ENCODE measurements at regions of chr20 and their contacts with region 1.

Region 1: DNA sequence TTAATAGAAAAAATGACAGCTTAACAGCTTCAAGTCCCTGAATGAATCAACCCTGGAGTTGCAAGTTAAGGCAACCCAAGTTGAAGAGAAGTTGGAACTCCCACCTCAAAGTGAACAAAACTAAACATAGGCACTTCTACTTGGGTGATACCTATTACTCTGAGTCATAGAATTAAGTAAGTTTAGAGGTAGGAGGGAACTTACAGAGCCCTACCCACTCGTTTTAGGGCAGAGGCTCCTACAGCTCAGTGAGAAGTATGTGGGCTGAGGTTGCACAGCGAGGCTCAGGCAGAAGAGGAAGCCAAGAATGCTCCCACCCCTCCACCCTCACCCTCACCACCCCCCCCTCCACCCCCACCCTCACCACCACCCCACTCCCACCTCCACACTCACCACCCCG is 42.2 kb downstream of the NFATC2 start:
- DNase-seq: peak; percentile 68
- H3K4me3 Mint-ChIP-seq: no peak overlapping the region
- H3K27ac Mint-ChIP-seq: peak overlapping the region; percentile 94
- H3K4me1 Mint-ChIP-seq: peaks cover 73% of the 10 kb centered on the region
- H3K27me3 Mint-ChIP-seq: no peaks in the 10 kb centered on the region

Region 2: GRCh38 chr20:51385646-51386530 is 114.4 kb before region 1 on chr20:
- CTCF ChIA-PET with region 1: interaction called, 6 read pairs
- POLR2A ChIA-PET with region 1: no interaction called
- intact Hi-C with region 1: loop called (anchors 1 kb)
- DNase-seq: peak; percentile 50
- H3K4me3 Mint-ChIP-seq: no peak overlapping the region
- H3K27ac Mint-ChIP-seq: no peak overlapping the region
- H3K4me1 Mint-ChIP-seq: peaks cover 73% of the 10 kb centered on the region
- H3K27me3 Mint-ChIP-seq: no peaks in the 10 kb centered on the region

Region 3: DNA sequence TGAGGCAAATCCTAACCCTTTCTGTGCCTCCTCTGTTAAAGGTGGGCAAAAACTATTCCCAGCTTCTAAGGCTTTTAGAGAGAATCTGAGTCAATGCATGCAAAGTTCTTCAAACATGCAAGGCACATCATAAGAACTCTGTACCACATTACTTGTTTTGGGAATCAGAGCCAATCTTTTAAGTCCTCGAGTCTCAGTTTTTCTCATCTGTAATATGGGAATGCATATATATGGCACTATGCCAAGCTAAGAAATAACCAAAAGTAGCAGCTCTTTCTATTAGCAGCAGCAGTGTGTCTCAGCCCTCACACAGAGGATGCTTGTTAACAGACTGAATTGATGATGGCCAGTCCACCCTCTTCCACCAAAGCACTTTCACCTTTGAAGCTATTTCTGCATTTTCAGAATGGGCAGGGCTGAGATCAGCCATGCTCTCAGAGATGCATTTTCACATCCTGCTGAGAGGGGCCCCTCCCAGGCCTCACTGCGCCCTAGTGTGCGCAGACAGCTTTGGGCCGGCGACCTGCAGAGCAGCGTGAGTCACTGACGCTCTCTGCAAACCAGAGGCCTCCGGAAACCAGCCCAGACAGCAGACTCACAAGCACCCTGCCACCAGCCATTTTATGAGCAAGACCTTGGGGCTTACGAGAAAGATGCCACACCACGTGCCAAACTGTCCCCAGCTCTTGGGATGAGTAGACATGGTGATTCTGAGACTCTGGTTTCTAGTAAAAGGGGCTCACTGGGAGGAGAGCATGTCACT is 95.8 kb before region 1 on chr20:
- CTCF ChIA-PET with region 1: no interaction called
- POLR2A ChIA-PET with region 1: interaction called, 10 read pairs
- intact Hi-C with region 1: loop called (anchors 1 kb)
- DNase-seq: peak; percentile 97
- H3K4me3 Mint-ChIP-seq: peak overlapping the region; percentile 17
- H3K27ac Mint-ChIP-seq: peak overlapping the region; percentile 99
- H3K4me1 Mint-ChIP-seq: peaks cover 93% of the 10 kb centered on the region
- H3K27me3 Mint-ChIP-seq: no peaks in the 10 kb centered on the region

Region 4: DNA sequence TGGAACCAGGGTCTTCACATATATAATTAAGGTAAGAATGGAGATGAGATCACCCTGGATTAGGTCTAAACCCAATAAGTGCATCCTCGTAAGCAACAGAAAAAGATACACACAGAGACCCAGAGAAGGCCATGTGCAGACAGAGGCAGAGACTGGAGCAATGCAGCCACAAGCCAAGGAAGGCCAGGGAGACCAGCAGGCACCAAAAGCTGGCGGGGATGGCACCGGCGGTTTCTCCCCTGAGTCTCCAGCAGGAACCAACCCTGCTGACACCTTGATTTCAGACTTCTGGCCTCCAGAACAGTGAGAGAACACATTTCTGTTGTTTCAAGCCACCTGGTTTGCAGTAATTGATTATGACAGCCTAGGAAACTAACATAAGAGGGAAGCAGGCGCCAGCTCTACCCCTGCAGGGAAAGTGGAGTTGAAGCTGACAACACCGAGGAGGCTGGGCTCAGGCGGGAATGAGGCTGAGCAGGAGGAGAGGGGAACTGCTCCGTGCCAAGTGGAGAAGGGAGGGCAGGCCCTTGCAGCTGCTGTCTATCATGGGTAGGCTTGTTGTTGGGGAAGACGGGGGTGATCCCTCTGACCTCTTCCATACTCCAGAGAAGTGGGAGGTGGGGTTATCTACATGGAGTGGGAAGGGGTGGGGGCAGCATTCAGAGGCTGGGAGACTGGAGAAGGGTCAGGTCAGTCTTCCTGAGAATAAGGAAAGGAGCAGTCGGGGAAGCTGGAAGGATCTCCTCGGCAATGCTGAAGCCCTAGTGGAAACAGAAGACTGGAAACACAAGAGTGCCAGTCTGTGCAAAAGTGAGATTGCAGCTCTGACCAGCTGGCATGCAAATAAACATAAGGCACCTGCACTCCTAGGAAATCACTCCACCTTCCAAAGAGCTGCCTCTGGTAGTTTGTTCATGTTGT is 30.5 kb before region 1 on chr20:
- CTCF ChIA-PET with region 1: interaction called, 3 read pairs
- POLR2A ChIA-PET with region 1: interaction called, 5 read pairs
- intact Hi-C with region 1: loop called (anchors 2 kb)
- DNase-seq: no peak
- H3K4me3 Mint-ChIP-seq: no peak overlapping the region
- H3K27ac Mint-ChIP-seq: peak overlapping the region; percentile 89
- H3K4me1 Mint-ChIP-seq: peaks cover 53% of the 10 kb centered on the region
- H3K27me3 Mint-ChIP-seq: no peaks in the 10 kb centered on the region

Region 5: GRCh38 chr20:51512645-51513044 is 12.3 kb after region 1 on chr20:
- CTCF ChIA-PET with region 1: interaction called, 6 read pairs
- POLR2A ChIA-PET with region 1: interaction called, 7 read pairs
- intact Hi-C with region 1: loop called (anchors 1 kb)
- DNase-seq: peak; percentile 47
- H3K4me3 Mint-ChIP-seq: no peak overlapping the region
- H3K27ac Mint-ChIP-seq: peak overlapping the region; percentile 44
- H3K4me1 Mint-ChIP-seq: peaks cover 79% of the 10 kb centered on the region
- H3K27me3 Mint-ChIP-seq: no peaks in the 10 kb centered on the region

Region 6: DNA sequence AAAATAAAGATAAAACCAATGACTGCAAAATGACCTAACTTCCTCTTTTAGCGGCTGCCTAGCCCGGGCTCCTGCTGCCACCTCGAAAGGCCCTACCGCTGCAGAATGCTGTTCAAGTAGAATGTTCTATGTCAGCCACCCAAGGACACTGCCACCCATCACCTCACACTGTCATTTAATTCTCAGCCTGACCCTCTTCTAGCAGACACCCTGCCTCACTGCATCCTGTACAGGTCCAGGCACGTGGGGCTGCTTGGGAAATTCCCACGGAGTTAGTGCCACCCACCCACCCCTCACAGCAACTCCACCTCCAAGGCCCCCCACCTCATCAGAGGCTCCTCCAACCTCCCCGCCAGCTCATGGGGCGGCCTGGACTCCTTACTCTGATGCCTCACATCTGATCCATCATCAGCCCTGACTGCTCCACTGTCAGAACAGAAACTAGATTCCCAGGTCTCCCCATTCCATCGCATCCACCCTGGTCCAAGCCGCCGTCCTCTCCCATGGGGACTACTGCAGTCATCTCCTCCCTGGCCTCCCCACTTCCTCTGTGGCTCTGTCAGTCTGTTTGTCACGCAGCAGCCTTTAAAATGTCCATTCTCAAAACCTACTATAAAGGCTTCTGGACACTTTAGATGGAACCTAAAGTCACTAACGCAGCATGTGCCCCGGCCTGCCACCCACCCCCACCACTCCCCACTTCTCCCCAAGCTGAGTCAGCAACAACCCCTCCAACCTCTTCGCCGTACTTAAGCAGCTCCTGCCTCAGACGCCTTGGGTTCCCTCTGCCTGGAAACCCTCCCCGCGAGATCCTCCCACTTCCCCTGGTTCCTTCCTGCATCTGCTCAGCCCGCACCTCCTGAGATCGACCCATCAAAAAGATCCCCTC is 25.2 kb after region 1 on chr20:
- CTCF ChIA-PET with region 1: interaction called, 6 read pairs
- POLR2A ChIA-PET with region 1: interaction called, 26 read pairs
- intact Hi-C with region 1: loop called (anchors 1 kb)
- DNase-seq: peak; percentile 75
- H3K4me3 Mint-ChIP-seq: peak overlapping the region; percentile 70
- H3K27ac Mint-ChIP-seq: peak overlapping the region; percentile 94
- H3K4me1 Mint-ChIP-seq: peaks cover 73% of the 10 kb centered on the region
- H3K27me3 Mint-ChIP-seq: no peaks in the 10 kb centered on the region

Region 7: DNA sequence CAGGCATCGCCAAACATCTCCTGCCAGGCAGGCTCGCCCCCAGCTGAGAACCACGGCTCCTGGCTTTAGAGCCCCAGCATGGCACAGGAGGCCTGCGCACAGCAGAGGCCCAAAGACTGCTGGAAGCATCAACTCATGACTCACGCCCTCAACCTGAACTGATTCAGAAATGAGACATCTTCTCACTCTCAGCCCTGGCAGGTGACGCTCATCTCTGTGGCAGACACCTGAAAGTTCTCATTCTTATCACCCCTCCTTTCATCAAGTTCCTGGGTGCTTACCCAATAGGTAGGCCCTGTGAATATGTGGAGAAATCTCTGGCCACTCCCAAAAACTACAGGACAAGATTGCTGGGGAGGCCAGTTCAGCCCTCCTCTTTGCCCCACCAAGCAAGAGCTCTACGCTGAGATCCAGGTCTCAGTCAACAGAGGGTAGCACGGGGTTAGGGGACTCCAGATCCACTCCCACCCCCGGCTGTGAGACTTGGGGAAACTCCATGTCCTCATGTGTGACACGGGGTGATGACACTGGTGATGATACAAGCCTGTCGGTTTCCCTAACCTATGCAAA is 30.9 kb after region 1 on chr20:
- CTCF ChIA-PET with region 1: interaction called, 6 read pairs
- POLR2A ChIA-PET with region 1: interaction called, 26 read pairs
- intact Hi-C with region 1: loop called (anchors 1 kb)
- DNase-seq: peak; percentile 91
- H3K4me3 Mint-ChIP-seq: peak overlapping the region; percentile 84
- H3K27ac Mint-ChIP-seq: peak overlapping the region; percentile 94
- H3K4me1 Mint-ChIP-seq: peaks cover 94% of the 10 kb centered on the region
- H3K27me3 Mint-ChIP-seq: no peaks in the 10 kb centered on the region